Panc1 (cell line): ENCODE measurements at regions of chr12 and their contacts with region 1.

Region 1: DNA sequence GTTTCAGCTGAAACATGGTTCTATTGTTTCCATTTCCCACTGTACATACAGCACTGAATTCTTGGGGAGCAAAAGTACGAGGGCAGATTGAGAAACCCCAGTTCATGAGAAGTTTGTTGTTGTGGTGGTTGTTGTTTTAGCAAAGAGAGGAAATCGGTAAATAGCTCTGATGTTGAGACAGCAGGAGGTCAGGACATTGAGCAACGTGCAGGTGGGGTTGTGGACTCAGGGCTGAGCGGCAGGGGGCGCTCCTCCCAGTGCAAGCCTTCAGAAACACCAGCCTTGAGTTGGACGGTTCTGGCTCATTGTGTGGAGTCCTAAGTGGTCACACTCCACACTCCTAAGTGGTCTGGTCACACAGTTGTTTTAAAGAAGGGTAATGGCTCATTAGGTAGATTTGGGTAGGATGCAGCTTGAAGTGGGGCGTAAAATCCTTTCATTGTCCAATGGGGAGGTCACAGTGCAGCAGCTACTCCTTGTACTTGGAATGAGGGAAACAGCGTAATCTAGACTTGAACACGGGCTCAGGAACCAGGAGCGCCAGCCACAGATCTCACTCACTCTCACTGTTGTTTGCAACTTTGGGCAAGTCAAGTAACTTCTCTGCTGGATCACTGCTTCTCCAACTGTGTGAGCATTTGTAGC is 14.5 kb upstream of the PWP1 start:
- DNase-seq: no peak
- ATAC-seq: peak; percentile 66; the same call in 1 of the 2 replicates
- H3K4me3 ChIP-seq: no peak overlapping the region
- H3K27ac ChIP-seq: no peak overlapping the region
- H3K4me1 ChIP-seq: no peaks in the 10 kb centered on the region
- H3K27me3 ChIP-seq: peaks cover 20% of the 10 kb centered on the region
- CTCF ChIP-seq: peak; percentile 80

Region 2: DNA sequence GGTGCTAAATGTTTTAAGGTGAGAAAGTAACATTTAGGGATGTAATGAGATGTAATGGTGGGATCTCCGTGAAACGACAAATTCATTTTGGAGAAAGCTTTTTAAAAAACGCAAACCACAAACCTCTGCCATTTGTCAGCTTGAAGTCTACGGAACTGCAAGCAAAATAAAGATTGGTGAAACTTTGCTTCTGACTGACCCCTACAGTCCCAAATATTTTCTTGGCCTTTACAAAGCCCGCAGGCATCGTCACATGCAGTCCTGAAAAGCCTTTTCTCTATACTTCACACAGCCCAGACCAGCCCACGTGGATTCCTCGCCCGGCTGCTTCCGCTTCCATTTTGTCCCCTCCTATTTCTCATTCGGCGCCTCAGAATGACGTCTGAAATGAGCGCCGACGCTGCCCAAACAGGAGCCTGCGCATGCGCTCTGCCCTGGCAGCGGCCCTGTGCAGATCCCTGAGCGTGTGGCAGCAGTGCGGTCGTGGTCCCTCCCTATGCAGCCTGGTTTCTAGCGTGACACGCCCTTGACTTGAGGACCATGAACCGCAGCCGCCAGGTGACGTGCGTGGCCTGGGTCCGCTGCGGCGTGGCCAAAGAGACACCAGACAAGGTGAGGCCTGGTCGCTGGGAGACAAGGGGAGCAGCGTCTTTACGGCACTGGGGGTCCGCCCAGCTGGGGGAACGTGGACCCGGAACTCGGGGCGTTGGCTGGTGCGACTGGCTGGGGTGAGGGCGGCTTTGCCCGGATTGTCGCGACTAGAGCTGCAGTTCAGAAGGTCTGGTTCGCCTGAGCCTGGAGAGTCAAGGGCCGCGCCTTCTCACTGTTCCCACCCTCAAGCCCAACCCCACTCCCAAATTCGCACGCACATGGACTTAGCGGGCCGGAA is 14.5 kb after region 1 on chr12 and contains the start of gene PWP1:
- CTCF ChIA-PET with region 1: interaction called, 6 read pairs
- POLR2A ChIA-PET with region 1: interaction called, 10 read pairs
- in situ Hi-C with region 1: no loop called
- intact Hi-C with region 1: no loop called
- DNase-seq: peak; percentile 69
- ATAC-seq: peak; percentile 97
- H3K4me3 ChIP-seq: peak within 1 kb of the TSS; percentile 81 to 99
- H3K27ac ChIP-seq: peak within 1 kb of the TSS; percentile 92
- H3K4me1 ChIP-seq: peaks cover 6% of the 10 kb centered on the region; the same call in 1 of the 2 replicates
- H3K27me3 ChIP-seq: no peaks in the 10 kb centered on the region
- CTCF ChIP-seq: no peak
- total RNA-seq, gene PWP1: 61.7 TPM

Region 3: GRCh38 chr12:108080363-108080762 is 409.2 kb after region 1 on chr12:
- CTCF ChIA-PET with region 1: interaction called, 11 read pairs
- POLR2A ChIA-PET with region 1: no interaction called
- in situ Hi-C with region 1: no loop called
- intact Hi-C with region 1: no loop called
- DNase-seq: no peak
- ATAC-seq: no peak
- H3K4me3 ChIP-seq: no peak overlapping the region
- H3K27ac ChIP-seq: no peak overlapping the region
- H3K4me1 ChIP-seq: no peaks in the 10 kb centered on the region
- H3K27me3 ChIP-seq: peaks cover 2% of the 10 kb centered on the region; the same call in 1 of the 2 replicates
- CTCF ChIP-seq: no peak

Region 4: DNA sequence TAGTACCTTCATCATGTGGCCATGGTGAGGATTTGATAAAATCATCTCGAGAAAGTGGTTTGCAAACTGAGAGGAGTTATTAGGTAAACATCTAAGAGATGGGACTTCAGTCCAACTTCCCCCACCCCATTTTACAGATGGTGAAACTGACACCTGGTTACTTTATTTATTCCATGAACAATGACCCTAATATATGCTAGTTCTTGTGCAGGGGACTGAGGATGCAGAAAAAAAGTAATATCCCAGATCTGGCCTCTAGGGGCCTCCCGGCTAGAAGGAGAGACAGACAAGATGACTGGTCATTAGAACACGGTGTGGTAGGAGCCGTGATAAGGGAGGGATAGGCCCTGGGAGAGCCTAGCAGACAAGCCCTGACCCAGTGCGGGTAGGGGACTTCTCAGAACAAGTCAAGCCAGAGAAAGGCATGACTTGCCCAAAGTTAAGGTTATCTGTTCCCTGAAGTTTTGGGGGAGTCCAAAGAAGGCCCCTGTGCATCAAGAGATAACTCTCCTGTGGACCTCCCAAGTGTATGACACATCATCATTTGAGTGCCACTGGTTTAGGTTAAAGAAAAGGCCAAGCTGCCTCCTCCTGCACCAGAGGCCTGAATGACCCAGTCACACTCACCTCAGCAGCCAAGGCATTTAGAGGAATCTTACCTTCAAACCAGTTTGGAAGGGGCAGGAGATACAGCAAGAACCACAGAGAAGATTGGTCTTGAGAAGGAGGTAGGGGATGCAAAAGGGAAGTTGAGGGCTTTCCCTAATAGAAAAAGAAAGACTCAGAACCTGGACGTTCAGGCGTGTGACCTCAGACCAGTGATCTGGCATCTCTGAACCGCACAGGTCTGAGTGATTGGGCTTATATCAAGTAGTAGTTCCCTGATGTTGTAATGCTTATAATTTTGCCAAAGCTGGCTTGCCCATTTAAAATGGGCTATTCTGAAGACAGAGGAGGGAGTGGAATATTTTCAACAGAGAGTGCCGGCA is 666.4 kb after region 1 on chr12:
- CTCF ChIA-PET with region 1: no interaction called
- POLR2A ChIA-PET with region 1: no interaction called
- in situ Hi-C with region 1: no loop called
- intact Hi-C with region 1: no loop called
- DNase-seq: peak; percentile 12
- ATAC-seq: peak; percentile 86
- H3K4me3 ChIP-seq: no peak overlapping the region
- H3K27ac ChIP-seq: no peak overlapping the region
- H3K4me1 ChIP-seq: no peaks in the 10 kb centered on the region
- H3K27me3 ChIP-seq: no peaks in the 10 kb centered on the region; the same call in 1 of the 2 replicates
- CTCF ChIP-seq: peak; percentile 67